Activated naive CD4-positive, alpha-beta T cell treated with anti-CD3 and anti-CD28 coated beads, Interleukin-2, amount 10 ng/mL, durations not matched to agents 7 days and 5 days (primary cell): ENCODE measurements at regions of chr7 and their contacts with region 1.

Region 1: GRCh38 chr7:101436857-101437576 is 74.3 kb downstream of the COL26A1 start:
- DNase-seq: no peak
- H3K4me3 Mint-ChIP-seq: no peak overlapping the region
- H3K27ac Mint-ChIP-seq: no peak overlapping the region
- H3K4me1 Mint-ChIP-seq: peaks cover 6% of the 10 kb centered on the region
- H3K27me3 Mint-ChIP-seq: peaks cover 54% of the 10 kb centered on the region

Region 2: GRCh38 chr7:101363734-101364374 is 73.2 kb before region 1 on chr7:
- CTCF ChIA-PET with region 1: interaction called, 13 read pairs
- DNase-seq: peak; percentile 77
- H3K4me3 Mint-ChIP-seq: no peak overlapping the region
- H3K27ac Mint-ChIP-seq: no peak overlapping the region
- H3K4me1 Mint-ChIP-seq: no peaks in the 10 kb centered on the region
- H3K27me3 Mint-ChIP-seq: peaks cover 59% of the 10 kb centered on the region

Region 3: GRCh38 chr7:101420436-101420835 is 16.6 kb before region 1 on chr7:
- CTCF ChIA-PET with region 1: no interaction called
- DNase-seq: no peak
- H3K4me3 Mint-ChIP-seq: no peak overlapping the region
- H3K27ac Mint-ChIP-seq: no peak overlapping the region
- H3K4me1 Mint-ChIP-seq: peaks cover 2% of the 10 kb centered on the region
- H3K27me3 Mint-ChIP-seq: peaks cover 26% of the 10 kb centered on the region